ENCODE measurements at regions of chr4 and their contacts with region 1.

Region 1: GRCh38 chr4:98143001-98143899 is at the start of gene STPG2:
- DNase-seq: peak; percentile 87 to 96 (median 93)
- ATAC-seq: peak; percentile 99
- H3K4me3 ChIP-seq: peak within 1 kb of the TSS; percentile 69 to 70
- H3K4me3 Mint-ChIP-seq: peak within 1 kb of the TSS; percentile 94
- H3K27ac ChIP-seq: peak within 1 kb of the TSS; percentile 68 to 90
- H3K27ac Mint-ChIP-seq: peak within 1 kb of the TSS; percentile 96
- H3K4me1 ChIP-seq: peaks cover 7% of the 10 kb centered on the region
- H3K4me1 Mint-ChIP-seq: peaks cover 17% of the 10 kb centered on the region
- H3K27me3 ChIP-seq: peaks cover 0 to 2% of the 10 kb centered on the region in 2 experiments
- H3K27me3 Mint-ChIP-seq: no peaks in the 10 kb centered on the region
- CTCF ChIP-seq: peak; percentile 64
- total RNA-seq, gene STPG2: not detected

Region 2: DNA sequence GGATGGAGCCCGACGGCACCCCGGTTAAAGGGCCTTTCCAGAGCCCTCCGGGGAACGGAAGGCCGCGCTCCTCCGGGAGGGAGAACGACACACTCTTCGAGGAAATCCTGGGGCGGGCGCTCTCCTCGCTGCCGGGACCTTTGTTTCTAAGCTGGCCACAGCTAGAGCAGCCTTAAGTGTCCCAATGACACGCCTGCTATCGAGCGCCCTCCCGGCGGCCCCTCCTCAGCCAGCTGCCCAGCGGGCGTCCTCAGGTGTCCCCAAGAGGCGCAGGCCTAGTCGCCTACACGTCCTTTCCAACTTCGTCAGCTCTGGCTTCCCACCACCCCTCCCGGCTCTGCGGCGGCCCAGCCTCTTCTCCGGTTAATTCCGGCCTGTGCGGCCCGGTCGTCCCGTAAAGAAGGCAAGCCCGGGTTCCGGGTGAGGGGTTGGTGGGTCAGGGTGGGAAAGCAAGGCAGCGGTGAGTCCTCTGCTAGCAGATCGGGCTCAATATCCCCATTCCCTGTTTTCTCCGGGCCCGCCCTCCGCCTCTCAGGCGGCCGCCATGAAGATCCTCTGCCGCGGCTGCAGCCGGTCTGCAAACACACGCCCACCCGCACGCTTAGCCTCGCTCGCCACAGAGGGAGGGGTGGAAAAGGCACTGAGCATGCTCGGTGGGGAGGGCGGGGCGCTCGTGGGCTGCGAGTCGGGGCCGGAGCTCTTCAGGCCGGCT is 117.5 kb after region 1 on chr4:
- CTCF ChIA-PET with region 1: interaction called, 4 read pairs
- POLR2A ChIA-PET with region 1: interaction called, 15 read pairs
- intact Hi-C with region 1: loop called (anchors 1 to 2 kb)
- DNase-seq: peak; percentile 67 to 95 (median 88)
- ATAC-seq: peak; percentile 72
- H3K4me3 ChIP-seq: peak overlapping the region; percentile 89 to 96
- H3K4me3 Mint-ChIP-seq: peak overlapping the region; percentile 94
- H3K27ac ChIP-seq: peak overlapping the region; percentile 77 to 79
- H3K27ac Mint-ChIP-seq: peak overlapping the region; percentile 95
- H3K4me1 ChIP-seq: peaks cover 27% of the 10 kb centered on the region
- H3K4me1 Mint-ChIP-seq: peaks cover 51% of the 10 kb centered on the region
- H3K27me3 ChIP-seq: no peaks in the 10 kb centered on the region
- H3K27me3 Mint-ChIP-seq: no peaks in the 10 kb centered on the region
- CTCF ChIP-seq: no peak

Region 3: DNA sequence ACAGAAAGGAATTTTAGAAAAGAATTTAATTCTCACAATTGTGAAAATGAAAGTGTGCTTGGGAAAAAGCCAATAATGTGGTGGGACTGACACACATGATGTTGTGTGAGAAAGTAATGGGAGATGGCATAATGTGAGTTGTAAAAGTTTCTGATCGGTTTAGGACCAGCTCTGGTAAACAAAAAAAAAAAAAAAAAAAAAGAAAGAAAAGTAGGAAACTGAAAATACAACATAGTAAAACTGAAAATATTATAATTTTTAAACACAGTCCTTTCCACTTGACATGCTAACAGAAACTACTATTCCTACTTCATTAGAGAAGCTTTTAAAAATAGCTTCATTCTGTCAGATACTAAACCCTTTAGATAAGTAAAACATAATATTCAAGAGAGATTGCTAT is 146.1 kb after region 1 on chr4:
- CTCF ChIA-PET with region 1: no interaction called
- POLR2A ChIA-PET with region 1: no interaction called
- intact Hi-C with region 1: no loop called
- DNase-seq: peak in 1 of 9 experiments; percentile 18
- ATAC-seq: no peak
- H3K4me3 ChIP-seq: no peak overlapping the region
- H3K4me3 Mint-ChIP-seq: peak overlapping the region; percentile 6
- H3K27ac ChIP-seq: no peak overlapping the region
- H3K27ac Mint-ChIP-seq: peak overlapping the region; percentile 29
- H3K4me1 ChIP-seq: peaks cover 8% of the 10 kb centered on the region
- H3K4me1 Mint-ChIP-seq: peaks cover 60% of the 10 kb centered on the region
- H3K27me3 ChIP-seq: no peaks in the 10 kb centered on the region
- H3K27me3 Mint-ChIP-seq: no peaks in the 10 kb centered on the region
- CTCF ChIP-seq: no peak

Region 4: GRCh38 chr4:98446499-98447375 is 303.5 kb after region 1 on chr4:
- CTCF ChIA-PET with region 1: no interaction called
- POLR2A ChIA-PET with region 1: interaction called, 3 read pairs
- intact Hi-C with region 1: loop called (anchors 5 kb)
- DNase-seq: peak; percentile 18 to 88 (median 65)
- ATAC-seq: peak; percentile 87
- H3K4me3 ChIP-seq: peak overlapping the region; percentile 9 to 16
- H3K4me3 Mint-ChIP-seq: peak overlapping the region; percentile 68
- H3K27ac ChIP-seq: peak overlapping the region in 1 of 2 experiments; percentile 68
- H3K27ac Mint-ChIP-seq: peak overlapping the region; percentile 90
- H3K4me1 ChIP-seq: peaks cover 35% of the 10 kb centered on the region
- H3K4me1 Mint-ChIP-seq: peaks cover 38% of the 10 kb centered on the region
- H3K27me3 ChIP-seq: no peaks in the 10 kb centered on the region
- H3K27me3 Mint-ChIP-seq: no peaks in the 10 kb centered on the region
- CTCF ChIP-seq: no peak

Region 5: DNA sequence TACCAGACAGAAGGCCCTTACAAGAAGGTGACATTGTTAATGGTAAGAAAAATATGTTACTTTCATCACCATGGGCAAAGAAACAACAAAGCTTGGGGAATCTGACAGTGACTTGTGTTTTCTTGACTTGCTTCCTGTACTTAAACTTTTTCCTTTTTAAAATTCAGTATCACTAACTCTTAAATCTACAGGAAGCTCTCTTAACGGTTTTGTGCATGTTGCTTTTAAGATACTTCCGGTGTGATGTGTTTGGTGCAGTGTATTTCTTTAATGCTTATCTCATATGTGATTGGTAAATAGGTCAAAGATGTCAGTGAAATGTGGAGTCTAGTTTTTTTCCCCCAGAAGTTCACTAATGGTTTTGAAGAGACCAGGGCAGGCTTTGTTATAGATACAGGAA is 900.1 kb after region 1 on chr4:
- CTCF ChIA-PET with region 1: no interaction called
- POLR2A ChIA-PET with region 1: no interaction called
- intact Hi-C with region 1: loop called in 1 of 2 experiments (anchors 5 kb)
- DNase-seq: peak in 2 of 9 experiments; percentile 54 to 75
- ATAC-seq: peak; percentile 96
- H3K4me3 ChIP-seq: no peak overlapping the region
- H3K4me3 Mint-ChIP-seq: peak overlapping the region; percentile 20
- H3K27ac ChIP-seq: peak overlapping the region; percentile 54 to 85
- H3K27ac Mint-ChIP-seq: peak overlapping the region; percentile 84
- H3K4me1 ChIP-seq: peaks cover 20% of the 10 kb centered on the region
- H3K4me1 Mint-ChIP-seq: peaks cover 19% of the 10 kb centered on the region
- H3K27me3 ChIP-seq: no peaks in the 10 kb centered on the region
- H3K27me3 Mint-ChIP-seq: no peaks in the 10 kb centered on the region
- CTCF ChIP-seq: no peak

Region 6: GRCh38 chr4:99088481-99089365 is 945.5 kb after region 1 on chr4 and contains the start of gene ADH5:
- CTCF ChIA-PET with region 1: no interaction called
- POLR2A ChIA-PET with region 1: interaction called, 13 read pairs
- intact Hi-C with region 1: loop called (anchors 1 to 2 kb)
- DNase-seq: peak; percentile 88 to 94 (median 93)
- ATAC-seq: peak; percentile 96
- H3K4me3 ChIP-seq: peak within 1 kb of the TSS; percentile 59 to 91
- H3K4me3 Mint-ChIP-seq: peak within 1 kb of the TSS; percentile 99
- H3K27ac ChIP-seq: peak within 1 kb of the TSS; percentile 76 to 86
- H3K27ac Mint-ChIP-seq: peak within 1 kb of the TSS; percentile 99
- H3K4me1 ChIP-seq: peaks cover 23% of the 10 kb centered on the region
- H3K4me1 Mint-ChIP-seq: peaks cover 58% of the 10 kb centered on the region
- H3K27me3 ChIP-seq: no peaks in the 10 kb centered on the region
- H3K27me3 Mint-ChIP-seq: no peaks in the 10 kb centered on the region
- CTCF ChIP-seq: no peak
- total RNA-seq, gene ADH5: 50.0 to 51.7 TPM

Region 7: DNA sequence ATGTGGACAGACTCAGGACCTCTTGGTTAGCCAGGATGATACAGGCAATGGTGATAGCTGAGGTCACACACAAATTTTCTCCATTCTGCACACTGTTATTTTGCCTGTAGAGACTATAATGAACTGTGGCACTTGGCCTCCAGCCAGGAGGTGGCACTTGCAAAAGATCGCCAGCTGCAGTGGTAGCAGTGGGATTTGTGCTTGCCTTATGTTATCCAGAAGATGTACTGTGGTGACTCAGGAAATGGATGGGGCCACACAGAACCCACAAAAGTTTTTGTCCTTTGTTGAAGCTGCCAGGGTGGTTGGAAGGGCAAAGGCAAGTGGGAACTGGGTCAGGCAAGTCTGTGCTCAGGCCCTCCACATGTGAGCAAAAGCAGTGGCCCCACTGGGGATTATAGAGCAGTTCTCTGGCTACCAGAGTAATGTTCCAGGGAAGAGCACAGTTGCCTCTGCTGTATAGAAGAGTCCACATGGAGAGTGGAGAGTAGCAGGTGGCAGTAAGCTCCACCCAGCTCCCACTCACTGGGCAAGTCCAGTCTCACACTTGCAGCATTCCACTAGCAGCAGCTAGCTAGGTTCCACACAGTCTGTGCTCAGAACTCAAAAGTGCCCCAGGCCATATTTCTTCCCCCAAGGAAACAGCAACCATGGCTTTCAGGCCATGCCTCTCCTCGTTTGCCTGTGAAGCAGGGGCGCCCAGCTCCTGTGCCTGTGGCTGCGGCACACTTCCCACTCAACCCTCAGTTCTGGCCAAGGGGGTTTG is 1361.7 kb after region 1 on chr4:
- CTCF ChIA-PET with region 1: no interaction called
- POLR2A ChIA-PET with region 1: no interaction called
- intact Hi-C with region 1: loop called in 1 of 2 experiments (anchors 2 kb)
- DNase-seq: no peak
- ATAC-seq: no peak
- H3K4me3 ChIP-seq: no peak overlapping the region
- H3K4me3 Mint-ChIP-seq: no peak overlapping the region
- H3K27ac ChIP-seq: no peak overlapping the region
- H3K27ac Mint-ChIP-seq: peak overlapping the region; percentile 23
- H3K4me1 ChIP-seq: peaks cover 35% of the 10 kb centered on the region
- H3K4me1 Mint-ChIP-seq: peaks cover 39% of the 10 kb centered on the region
- H3K27me3 ChIP-seq: no peaks in the 10 kb centered on the region
- H3K27me3 Mint-ChIP-seq: no peaks in the 10 kb centered on the region
- CTCF ChIP-seq: no peak

Region 8: GRCh38 chr4:99894161-99894997 is 1751.1 kb after region 1 on chr4 and contains the start of gene LAMTOR3:
- CTCF ChIA-PET with region 1: no interaction called
- POLR2A ChIA-PET with region 1: no interaction called
- intact Hi-C with region 1: loop called in 1 of 2 experiments (anchors 10 kb)
- DNase-seq: peak; percentile 80 to 97 (median 88)
- ATAC-seq: peak; percentile 94
- H3K4me3 ChIP-seq: peak within 1 kb of the TSS; percentile 68 to 80
- H3K4me3 Mint-ChIP-seq: peak within 1 kb of the TSS; percentile 97
- H3K27ac ChIP-seq: peak within 1 kb of the TSS; percentile 77 to 87
- H3K27ac Mint-ChIP-seq: peak within 1 kb of the TSS; percentile 98
- H3K4me1 ChIP-seq: peaks cover 30% of the 10 kb centered on the region
- H3K4me1 Mint-ChIP-seq: peaks cover 49% of the 10 kb centered on the region
- H3K27me3 ChIP-seq: no peaks in the 10 kb centered on the region
- H3K27me3 Mint-ChIP-seq: no peaks in the 10 kb centered on the region
- CTCF ChIP-seq: no peak
- total RNA-seq, gene LAMTOR3: 29.3 to 32.4 TPM